Cardiac septum (tissue), 1 donor: ENCODE measurements at regions of chr3 and their contacts with region 1.

Region 1: DNA sequence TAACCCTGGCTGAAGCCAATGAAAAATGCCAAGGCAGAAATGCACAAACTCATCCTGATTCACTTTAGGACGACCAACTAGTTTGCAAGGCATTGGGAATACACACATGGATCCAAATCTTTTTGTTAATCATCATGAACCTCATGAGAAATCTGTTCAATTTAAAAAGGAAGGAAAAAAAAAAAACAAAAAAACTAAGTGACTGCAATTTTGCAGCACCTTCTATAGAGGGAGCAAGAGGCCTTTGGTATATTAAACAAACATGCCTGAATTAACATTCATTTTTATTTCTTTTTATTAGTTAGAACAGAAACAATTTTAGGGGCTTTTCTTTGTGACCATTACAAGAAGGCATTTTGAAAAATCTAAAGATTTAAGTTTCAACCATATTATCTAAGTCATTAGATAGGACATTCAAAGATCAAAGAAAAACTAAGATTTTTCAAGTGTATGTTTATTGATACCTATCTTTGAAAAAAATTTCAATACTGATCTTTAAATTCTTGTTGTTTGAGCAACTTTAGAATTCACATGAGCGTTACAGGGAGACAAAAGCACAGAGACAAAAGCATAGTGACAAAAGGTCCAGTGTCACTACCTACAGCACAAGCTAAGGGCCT is 182.4 kb downstream of the CBLB start:
- DNase-seq: no peak

Region 2: DNA sequence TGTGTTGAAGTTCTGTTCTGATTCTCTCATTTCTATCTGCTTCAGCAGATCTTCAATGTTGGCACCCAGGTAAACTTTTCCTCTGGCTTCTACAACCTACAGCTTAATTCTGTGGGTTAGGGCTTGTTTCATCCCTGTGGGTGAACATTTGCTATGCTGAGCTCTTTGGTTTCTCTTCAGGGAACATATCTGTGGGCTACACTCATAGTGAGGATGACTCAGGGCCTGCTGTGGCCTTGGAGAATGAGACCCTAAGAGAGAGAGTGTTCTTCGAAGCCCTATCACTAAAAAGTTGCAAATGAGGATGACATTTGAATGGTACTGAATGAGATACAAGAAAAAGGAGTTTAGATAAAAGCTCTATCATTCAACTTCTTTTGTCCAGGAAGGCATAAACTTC is 528.7 kb after region 1 on chr3:
- intact Hi-C with region 1: loop called (anchors 10 kb)
- DNase-seq: no peak

Region 3: GRCh38 chr3:106609666-106610301 is 923.4 kb after region 1 on chr3:
- intact Hi-C with region 1: loop called (anchors 5 kb)
- DNase-seq: no peak